ENCODE measurements at regions of chr3 and their contacts with region 1.

Region 1: GRCh38 chr3:149352556-149352955 is 19.1 kb upstream of the TM4SF18 start:
- DNase-seq: peak; percentile 75
- CTCF ChIP-seq: peak; percentile 73

Region 2: GRCh38 chr3:149366031-149366430 is 13.5 kb after region 1 on chr3:
- CTCF ChIA-PET with region 1: interaction called, 15 read pairs
- POLR2A ChIA-PET with region 1: no interaction called
- DNase-seq: no peak
- CTCF ChIP-seq: no peak

Region 3: GRCh38 chr3:149480325-149481017 is 127.9 kb after region 1 on chr3:
- CTCF ChIA-PET with region 1: interaction called, 13 read pairs
- POLR2A ChIA-PET with region 1: no interaction called
- DNase-seq: peak; percentile 83
- CTCF ChIP-seq: peak; percentile 91

Measured in GM10248 (cell line).